Activated B cell treated with CpG ODN at 0.5 μM for 24 hours (primary cell): ENCODE measurements at regions of chr5 and their contacts with region 1.

Region 1: GRCh38 chr5:151126199-151126645 is 31.4 kb downstream of the ANXA6 start:
- DNase-seq: peak; percentile 61
- ATAC-seq: no peak
- H3K4me3 Mint-ChIP-seq: peak overlapping the region; percentile 79
- H3K27ac Mint-ChIP-seq: peak overlapping the region; percentile 95
- H3K4me1 Mint-ChIP-seq: peaks cover 89% of the 10 kb centered on the region
- H3K27me3 Mint-ChIP-seq: no peaks in the 10 kb centered on the region
- CTCF ChIP-seq: no peak

Region 2: GRCh38 chr5:150000256-150000989 is 1125.8 kb before region 1 on chr5 and contains the starts of genes HMGXB3 and TIGD6:
- CTCF ChIA-PET with region 1: no interaction called
- POLR2A ChIA-PET with region 1: no interaction called
- intact Hi-C with region 1: no loop called
- DNase-seq: peak; percentile 87
- ATAC-seq: peak; percentile 85
- H3K4me3 Mint-ChIP-seq: peak within 1 kb of the TSS; percentile 95
- H3K27ac Mint-ChIP-seq: peak within 1 kb of the TSS; percentile 91
- H3K4me1 Mint-ChIP-seq: peaks cover 28% of the 10 kb centered on the region
- H3K27me3 Mint-ChIP-seq: no peaks in the 10 kb centered on the region
- CTCF ChIP-seq: no peak
- total RNA-seq, gene HMGXB3: 28.5 and 36.8 TPM in 2 replicates
- total RNA-seq, gene TIGD6: 3.5 and 4.2 TPM in 2 replicates

Region 3: GRCh38 chr5:151051066-151051930 is 74.9 kb before region 1 on chr5:
- CTCF ChIA-PET with region 1: interaction called, 73 read pairs
- POLR2A ChIA-PET with region 1: interaction called, 7 read pairs
- intact Hi-C with region 1: no loop called
- DNase-seq: peak; percentile 59
- ATAC-seq: peak; percentile 89
- H3K4me3 Mint-ChIP-seq: no peak overlapping the region
- H3K27ac Mint-ChIP-seq: peak overlapping the region; percentile 76
- H3K4me1 Mint-ChIP-seq: peaks cover 37% of the 10 kb centered on the region
- H3K27me3 Mint-ChIP-seq: no peaks in the 10 kb centered on the region
- CTCF ChIP-seq: peak; percentile 41

Region 4: DNA sequence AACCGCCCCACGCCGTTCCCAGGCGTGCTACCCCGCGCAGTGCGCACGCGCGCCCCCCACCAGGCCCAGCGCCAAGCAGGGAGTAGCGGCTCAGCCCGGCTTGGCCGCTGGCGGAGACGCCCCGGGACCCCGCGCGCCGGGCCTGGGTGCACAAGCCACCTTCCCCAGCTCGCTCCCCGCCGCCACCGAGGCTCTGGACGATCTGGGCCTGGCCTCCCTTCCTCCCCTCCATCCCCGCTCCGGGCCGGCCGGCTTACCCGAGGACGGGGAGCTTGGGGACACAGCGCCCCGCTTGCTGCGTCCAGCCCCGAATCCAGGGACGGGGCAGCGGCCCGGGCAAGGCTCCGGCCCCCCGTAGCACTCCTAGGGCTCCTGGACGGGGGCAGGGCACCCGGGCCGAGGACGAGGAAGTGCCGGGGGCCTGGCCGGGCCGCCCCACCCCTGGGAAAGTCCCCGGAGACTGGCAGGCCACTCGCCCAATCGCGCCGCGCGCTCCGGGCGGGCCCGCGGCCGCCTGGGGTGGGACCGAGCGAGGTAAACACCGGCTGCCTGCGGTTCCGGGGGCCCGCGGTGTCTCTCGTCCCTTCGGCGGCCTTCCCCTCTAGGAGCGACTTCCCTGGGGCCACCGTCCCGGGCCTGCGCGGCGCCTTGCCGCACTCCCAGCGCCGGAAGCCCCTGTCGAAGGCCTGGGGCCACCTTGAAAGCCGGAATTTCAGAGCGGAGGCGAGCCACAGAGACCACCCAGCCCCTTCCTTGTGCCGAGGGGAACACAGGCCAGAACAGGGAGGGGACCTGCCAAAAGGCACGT is 45.4 kb before region 1 on chr5 and contains the start of gene TNIP1:
- CTCF ChIA-PET with region 1: interaction called, 6 read pairs
- POLR2A ChIA-PET with region 1: interaction called, 19 read pairs
- intact Hi-C with region 1: loop called (anchors 1 kb)
- DNase-seq: peak; percentile 99
- ATAC-seq: peak; percentile 81
- H3K4me3 Mint-ChIP-seq: peak within 1 kb of the TSS; percentile 93
- H3K27ac Mint-ChIP-seq: peak within 1 kb of the TSS; percentile 94
- H3K4me1 Mint-ChIP-seq: peaks cover 88% of the 10 kb centered on the region
- H3K27me3 Mint-ChIP-seq: no peaks in the 10 kb centered on the region
- CTCF ChIP-seq: no peak
- total RNA-seq, gene TNIP1: 506 and 512 TPM in 2 replicates

Region 5: GRCh38 chr5:151150471-151151262 is 24.4 kb after region 1 on chr5:
- CTCF ChIA-PET with region 1: interaction called, 128 read pairs
- POLR2A ChIA-PET with region 1: interaction called, 45 read pairs
- intact Hi-C with region 1: no loop called
- DNase-seq: peak; percentile 32
- ATAC-seq: peak; percentile 62
- H3K4me3 Mint-ChIP-seq: peak overlapping the region; percentile 33
- H3K27ac Mint-ChIP-seq: peak overlapping the region; percentile 87
- H3K4me1 Mint-ChIP-seq: peaks cover 96% of the 10 kb centered on the region
- H3K27me3 Mint-ChIP-seq: no peaks in the 10 kb centered on the region
- CTCF ChIP-seq: no peak

Region 6: DNA sequence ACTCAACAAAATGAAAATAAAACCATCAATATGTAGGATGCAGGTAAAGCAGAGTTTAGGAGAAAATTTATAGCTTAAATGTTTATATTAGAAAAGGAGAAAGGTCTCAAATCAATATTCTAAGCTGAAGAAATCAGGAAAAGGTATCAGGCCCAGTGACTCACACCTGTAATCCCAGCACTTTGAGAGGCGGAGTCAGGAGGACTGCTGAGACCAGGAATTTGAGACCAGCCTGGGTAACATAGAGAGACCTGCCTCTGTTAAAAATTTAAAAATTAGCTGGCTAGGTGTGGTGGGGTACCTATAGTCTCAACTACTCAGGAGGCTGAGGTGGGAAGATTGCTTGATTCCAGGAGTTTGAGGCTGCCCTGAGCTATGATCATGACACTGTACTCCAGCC is 65.4 kb after region 1 on chr5:
- CTCF ChIA-PET with region 1: interaction called, 6 read pairs
- POLR2A ChIA-PET with region 1: interaction called, 11 read pairs
- intact Hi-C with region 1: loop called (anchors 1 kb)
- DNase-seq: no peak
- ATAC-seq: no peak
- H3K4me3 Mint-ChIP-seq: peak overlapping the region; percentile 46
- H3K27ac Mint-ChIP-seq: peak overlapping the region; percentile 76
- H3K4me1 Mint-ChIP-seq: peaks cover 80% of the 10 kb centered on the region
- H3K27me3 Mint-ChIP-seq: no peaks in the 10 kb centered on the region
- CTCF ChIP-seq: no peak

Region 7: GRCh38 chr5:151223469-151224264 is 97.4 kb after region 1 on chr5 and contains the start of gene CCDC69:
- CTCF ChIA-PET with region 1: interaction called, 11 read pairs
- POLR2A ChIA-PET with region 1: interaction called, 27 read pairs
- intact Hi-C with region 1: no loop called
- DNase-seq: peak; percentile 56
- ATAC-seq: peak; percentile 51
- H3K4me3 Mint-ChIP-seq: peak within 1 kb of the TSS; percentile 91
- H3K27ac Mint-ChIP-seq: peak within 1 kb of the TSS; percentile 93
- H3K4me1 Mint-ChIP-seq: peaks cover 73% of the 10 kb centered on the region
- H3K27me3 Mint-ChIP-seq: no peaks in the 10 kb centered on the region
- CTCF ChIP-seq: no peak
- total RNA-seq, gene CCDC69: 98.9 and 109 TPM in 2 replicates

Region 8: GRCh38 chr5:151298063-151298855 is 172.0 kb after region 1 on chr5:
- CTCF ChIA-PET with region 1: interaction called, 6 read pairs
- POLR2A ChIA-PET with region 1: no interaction called
- intact Hi-C with region 1: loop called (anchors 5 kb)
- DNase-seq: no peak
- ATAC-seq: peak; percentile 58
- H3K4me3 Mint-ChIP-seq: no peak overlapping the region
- H3K27ac Mint-ChIP-seq: no peak overlapping the region
- H3K4me1 Mint-ChIP-seq: peaks cover 4% of the 10 kb centered on the region
- H3K27me3 Mint-ChIP-seq: peaks cover 15% of the 10 kb centered on the region
- CTCF ChIP-seq: no peak